ENCODE measurements at regions of chr2 and their contacts with region 1.

Region 1: GRCh38 chr2:190029546-190029945 is 33.0 kb downstream of the MSTN start:
- DNase-seq: no peak
- ATAC-seq: no peak
- H3K4me3 ChIP-seq: no peak overlapping the region
- H3K27ac ChIP-seq: no peak overlapping the region
- H3K4me1 ChIP-seq: no peaks in the 10 kb centered on the region
- H3K27me3 ChIP-seq: peaks cover 0 to 16% (median 4%) of the 10 kb centered on the region in 9 donors
- CTCF ChIP-seq: no peak
- POLR2A ChIP-seq: no peak

Region 2: DNA sequence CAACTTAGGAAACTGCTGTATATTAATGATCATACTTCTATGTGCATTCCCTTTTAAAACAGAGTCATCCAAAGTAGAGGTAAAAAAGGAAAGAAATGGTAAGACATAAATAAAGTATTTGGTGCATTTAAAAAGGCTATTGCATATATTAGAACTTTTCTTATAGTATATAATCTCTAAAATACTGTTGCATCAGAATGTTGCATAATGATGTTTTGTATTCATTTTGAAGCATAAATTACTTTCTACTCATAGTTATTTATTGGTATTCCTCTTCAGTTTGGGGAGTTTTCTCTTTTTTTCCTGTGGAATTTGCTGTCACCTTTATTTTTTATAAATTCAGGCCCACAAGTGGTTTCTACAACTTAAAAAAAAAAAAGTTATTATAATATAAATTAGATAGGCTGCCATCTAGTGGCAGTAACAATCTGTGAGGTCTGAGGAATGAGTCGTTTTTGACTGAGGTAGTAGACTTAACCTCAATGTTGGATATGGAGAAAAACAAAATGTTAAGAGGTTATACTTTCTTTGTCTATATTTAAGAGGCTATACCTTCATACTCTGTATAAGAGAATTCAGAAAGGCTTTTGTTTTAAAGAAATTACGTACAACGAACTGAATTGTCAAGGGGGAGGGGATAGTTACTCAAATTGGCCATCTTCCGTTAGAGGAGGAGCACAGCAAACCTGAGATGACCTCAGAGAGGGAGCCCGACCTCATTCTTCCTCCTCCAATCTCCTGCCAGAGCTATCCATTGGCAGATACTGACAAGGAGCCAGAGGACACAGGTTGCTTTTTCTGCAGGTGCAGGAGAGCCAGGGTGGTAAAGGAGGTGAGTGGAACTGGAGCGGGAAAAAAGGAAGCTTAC is 331.3 kb before region 1 on chr2:
- intact Hi-C with region 1: no loop called
- DNase-seq: peak in 1 of 5 donors; percentile 28
- ATAC-seq: peak in 3 of 4 donors; percentile 56 to 76 (median 68)
- H3K4me3 ChIP-seq: peak overlapping the region in 3 of 12 donors; percentile 10 to 14 (median 11)
- H3K27ac ChIP-seq: no peak overlapping the region
- H3K4me1 ChIP-seq: peaks cover 0 to 3% (median 0%) of the 10 kb centered on the region in 12 donors
- H3K27me3 ChIP-seq: no peaks in the 10 kb centered on the region
- CTCF ChIP-seq: peak; percentile 62 to 81 (median 70)
- POLR2A ChIP-seq: no peak

Region 3: DNA sequence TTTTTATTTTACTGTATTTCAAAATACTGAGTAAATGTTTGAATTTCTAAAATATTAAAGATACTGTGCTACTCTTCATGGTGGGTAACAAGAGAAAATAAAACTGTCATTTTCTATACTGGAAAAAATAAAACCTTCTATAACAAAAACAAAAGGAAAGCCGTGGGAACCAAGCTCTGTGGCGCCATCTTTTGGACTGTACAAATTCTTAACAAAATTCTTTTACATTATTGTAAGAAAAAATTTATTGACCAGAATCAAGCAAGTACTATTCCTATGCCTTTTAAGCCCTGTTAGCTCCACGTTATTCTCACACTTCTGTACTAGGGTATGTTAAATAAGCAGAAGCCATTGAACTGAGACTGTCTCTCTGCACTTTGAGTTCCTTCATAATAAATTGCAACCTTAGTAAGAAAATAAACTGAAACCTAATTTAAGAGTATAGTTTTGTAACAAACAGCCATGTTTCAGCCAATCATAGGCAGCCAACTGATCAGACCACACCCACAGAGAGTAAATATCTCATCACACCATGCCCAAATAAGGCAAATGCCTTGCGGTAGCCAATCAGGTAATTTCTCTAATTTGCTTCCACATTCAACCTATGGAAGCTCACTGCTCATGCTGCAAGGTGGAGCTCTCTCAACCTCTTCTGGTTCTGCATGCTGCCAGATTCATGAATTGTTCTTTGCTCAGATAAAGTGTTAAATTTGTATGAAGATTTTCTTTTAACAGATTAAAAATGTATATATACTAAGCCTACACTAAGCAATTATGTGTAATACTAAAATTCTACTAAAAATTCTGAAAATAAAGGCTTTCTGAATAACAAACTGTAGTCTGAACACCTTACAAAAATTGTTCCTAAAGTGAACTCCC is 247.9 kb after region 1 on chr2:
- intact Hi-C with region 1: loop called in 1 of 10 experiments (anchors 5 kb)
- DNase-seq: no peak
- ATAC-seq: no peak
- H3K4me3 ChIP-seq: no peak overlapping the region
- H3K27ac ChIP-seq: no peak overlapping the region
- H3K4me1 ChIP-seq: peaks cover 0 to 4% (median 0%) of the 10 kb centered on the region in 12 donors
- H3K27me3 ChIP-seq: no peaks in the 10 kb centered on the region
- CTCF ChIP-seq: peak in 11 of 12 donors; percentile 39 to 67 (median 53)
- POLR2A ChIP-seq: no peak